ENCODE measurements at regions of chr14 and their contacts with region 1.

Region 1: DNA sequence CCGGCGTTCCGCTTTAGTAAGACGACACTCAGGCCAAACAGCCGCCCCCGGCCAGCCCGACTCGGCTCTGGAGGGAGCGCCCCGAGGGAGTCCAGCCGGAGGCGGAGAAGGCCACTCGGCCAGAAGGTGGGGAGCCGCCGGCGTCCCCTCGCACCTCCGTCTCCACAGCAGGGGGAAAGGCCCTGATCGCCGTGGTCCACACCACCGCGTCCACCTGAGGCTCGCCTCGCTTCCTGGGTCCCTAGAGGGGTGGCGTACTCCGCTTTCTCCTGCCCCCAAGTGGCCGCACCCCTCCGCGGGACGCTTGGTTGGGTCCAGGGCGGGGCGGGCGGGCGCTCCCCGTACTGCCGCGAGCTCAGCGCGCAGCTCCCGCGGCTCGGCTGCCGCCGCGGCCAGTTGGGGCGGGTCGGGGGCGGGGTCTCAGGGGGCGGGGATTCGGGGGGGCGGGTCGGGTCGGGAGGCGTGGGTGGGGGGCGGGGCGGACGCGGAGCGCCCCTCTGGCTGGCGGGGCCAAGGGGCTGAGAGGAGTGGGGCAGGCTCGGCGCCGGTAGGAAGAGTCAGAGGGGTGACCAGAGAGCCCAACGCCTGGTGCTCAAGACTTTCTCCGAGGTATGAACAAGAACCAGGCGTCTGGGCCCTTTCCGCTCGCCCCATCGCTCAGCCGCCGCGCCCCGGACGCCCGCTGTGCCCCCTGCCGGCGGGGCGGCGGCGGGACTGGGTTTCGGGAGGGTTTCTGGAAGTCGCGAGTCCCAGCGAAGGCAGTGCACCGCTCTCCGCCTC is at the start of gene FRMD6:
- DNase-seq: peak; percentile 87
- H3K4me3 Mint-ChIP-seq: peak within 1 kb of the TSS; percentile 77
- H3K27ac Mint-ChIP-seq: peak within 1 kb of the TSS; percentile 77
- H3K4me1 Mint-ChIP-seq: peaks cover 36% of the 10 kb centered on the region
- H3K27me3 Mint-ChIP-seq: no peaks in the 10 kb centered on the region
- CTCF ChIP-seq: peak; percentile 90
- total RNA-seq, gene FRMD6: 104 and 135 TPM in 2 replicates

Region 2: GRCh38 chr14:51283402-51284085 is 368.0 kb before region 1 on chr14:
- CTCF ChIA-PET with region 1: interaction called, 32 read pairs
- POLR2A ChIA-PET with region 1: interaction called, 15 read pairs
- intact Hi-C with region 1: loop called (anchors 1 kb)
- DNase-seq: peak; percentile 84
- H3K4me3 Mint-ChIP-seq: no peak overlapping the region
- H3K27ac Mint-ChIP-seq: no peak overlapping the region
- H3K4me1 Mint-ChIP-seq: peaks cover 12% of the 10 kb centered on the region
- H3K27me3 Mint-ChIP-seq: no peaks in the 10 kb centered on the region
- CTCF ChIP-seq: peak; percentile 80

Region 3: DNA sequence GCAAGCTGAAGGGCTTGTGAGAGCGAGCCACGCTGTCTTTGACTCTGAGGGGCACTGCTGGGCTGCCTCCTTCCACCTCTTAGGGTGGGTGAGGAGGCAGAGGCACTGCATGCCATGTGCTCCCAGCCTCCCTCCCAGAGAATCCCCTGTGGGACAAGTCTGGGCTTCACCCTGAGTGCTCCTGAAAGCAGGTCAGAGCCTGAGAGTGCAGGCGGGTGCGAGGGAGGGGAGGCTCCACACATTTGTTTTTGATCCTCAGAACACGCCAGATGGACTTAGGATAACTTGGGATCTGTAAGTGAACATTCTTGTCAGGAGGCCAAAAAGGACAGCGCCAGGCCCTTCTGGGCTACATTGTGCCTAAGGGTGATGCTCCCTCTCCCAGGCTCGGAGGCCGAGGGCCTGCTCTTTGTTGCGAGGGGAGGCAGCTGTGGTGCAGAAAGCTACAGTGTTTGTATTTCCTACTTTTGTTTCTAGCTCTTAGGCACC is 256.2 kb before region 1 on chr14:
- CTCF ChIA-PET with region 1: interaction called, 10 read pairs
- POLR2A ChIA-PET with region 1: interaction called, 29 read pairs
- intact Hi-C with region 1: loop called (anchors 2 kb)
- DNase-seq: peak; percentile 95
- H3K4me3 Mint-ChIP-seq: peak overlapping the region; percentile 48
- H3K27ac Mint-ChIP-seq: peak overlapping the region; percentile 97
- H3K4me1 Mint-ChIP-seq: peaks cover 44% of the 10 kb centered on the region
- H3K27me3 Mint-ChIP-seq: no peaks in the 10 kb centered on the region
- CTCF ChIP-seq: no peak

Region 4: GRCh38 chr14:51539571-51540037 is 112.0 kb before region 1 on chr14:
- CTCF ChIA-PET with region 1: no interaction called
- POLR2A ChIA-PET with region 1: interaction called, 33 read pairs
- intact Hi-C with region 1: no loop called
- DNase-seq: peak; percentile 81
- H3K4me3 Mint-ChIP-seq: peak overlapping the region; percentile 49
- H3K27ac Mint-ChIP-seq: peak overlapping the region; percentile 92
- H3K4me1 Mint-ChIP-seq: peaks cover 52% of the 10 kb centered on the region
- H3K27me3 Mint-ChIP-seq: no peaks in the 10 kb centered on the region
- CTCF ChIP-seq: no peak

Region 5: GRCh38 chr14:51716610-51717009 is 65.0 kb after region 1 on chr14:
- CTCF ChIA-PET with region 1: interaction called, 8 read pairs
- POLR2A ChIA-PET with region 1: interaction called, 7 read pairs
- intact Hi-C with region 1: loop called (anchors 5 kb)
- DNase-seq: peak; percentile 65
- H3K4me3 Mint-ChIP-seq: no peak overlapping the region
- H3K27ac Mint-ChIP-seq: peak overlapping the region; percentile 47
- H3K4me1 Mint-ChIP-seq: peaks cover 11% of the 10 kb centered on the region
- H3K27me3 Mint-ChIP-seq: no peaks in the 10 kb centered on the region
- CTCF ChIP-seq: no peak

Region 6: GRCh38 chr14:51889851-51890250 is 238.3 kb after region 1 on chr14:
- CTCF ChIA-PET with region 1: no interaction called
- POLR2A ChIA-PET with region 1: no interaction called
- intact Hi-C with region 1: no loop called
- DNase-seq: no peak
- H3K4me3 Mint-ChIP-seq: no peak overlapping the region
- H3K27ac Mint-ChIP-seq: no peak overlapping the region
- H3K4me1 Mint-ChIP-seq: no peaks in the 10 kb centered on the region
- H3K27me3 Mint-ChIP-seq: no peaks in the 10 kb centered on the region
- CTCF ChIP-seq: no peak

Region 7: DNA sequence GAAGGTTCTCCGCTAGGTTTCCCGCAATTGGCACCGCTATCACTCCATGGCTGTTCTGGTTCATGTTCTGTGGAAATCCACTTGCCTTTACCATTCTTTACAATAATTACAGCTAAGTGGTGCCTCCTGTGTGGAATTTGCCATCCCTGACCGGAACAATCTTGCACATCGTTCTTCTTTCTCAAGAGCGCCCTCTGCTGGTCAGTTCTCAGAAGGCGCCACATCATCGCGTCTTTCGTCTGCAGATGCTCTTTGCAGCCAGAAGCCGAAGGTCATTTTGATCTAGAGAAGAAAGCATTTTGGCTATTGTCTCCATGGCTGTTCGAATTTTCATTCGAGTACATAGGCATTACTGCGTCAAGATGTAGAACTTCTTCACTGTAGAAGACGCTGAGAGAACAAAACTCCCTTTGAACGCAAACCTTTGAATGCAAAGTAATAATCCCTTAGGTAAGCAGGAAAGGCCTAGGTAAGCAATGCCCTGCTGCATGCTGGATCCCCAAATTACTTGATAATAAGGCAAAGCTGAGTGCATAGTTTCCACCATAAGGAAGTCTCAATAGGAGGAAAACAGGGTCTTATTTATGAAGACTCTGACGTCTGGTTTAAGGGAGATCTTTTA is 327.6 kb after region 1 on chr14:
- CTCF ChIA-PET with region 1: no interaction called
- POLR2A ChIA-PET with region 1: no interaction called
- intact Hi-C with region 1: loop called (anchors 1 kb)
- DNase-seq: peak; percentile 80
- H3K4me3 Mint-ChIP-seq: no peak overlapping the region
- H3K27ac Mint-ChIP-seq: no peak overlapping the region
- H3K4me1 Mint-ChIP-seq: no peaks in the 10 kb centered on the region
- H3K27me3 Mint-ChIP-seq: peaks cover 29% of the 10 kb centered on the region
- CTCF ChIP-seq: peak; percentile 86

Measured in MCF 10A (cell line).